Activated CD4-positive, alpha-beta T cell treated with anti-CD3 and anti-CD28 coated beads for 36 hours (primary cell): ENCODE measurements at regions of chr5 and their contacts with region 1.

Region 1: DNA sequence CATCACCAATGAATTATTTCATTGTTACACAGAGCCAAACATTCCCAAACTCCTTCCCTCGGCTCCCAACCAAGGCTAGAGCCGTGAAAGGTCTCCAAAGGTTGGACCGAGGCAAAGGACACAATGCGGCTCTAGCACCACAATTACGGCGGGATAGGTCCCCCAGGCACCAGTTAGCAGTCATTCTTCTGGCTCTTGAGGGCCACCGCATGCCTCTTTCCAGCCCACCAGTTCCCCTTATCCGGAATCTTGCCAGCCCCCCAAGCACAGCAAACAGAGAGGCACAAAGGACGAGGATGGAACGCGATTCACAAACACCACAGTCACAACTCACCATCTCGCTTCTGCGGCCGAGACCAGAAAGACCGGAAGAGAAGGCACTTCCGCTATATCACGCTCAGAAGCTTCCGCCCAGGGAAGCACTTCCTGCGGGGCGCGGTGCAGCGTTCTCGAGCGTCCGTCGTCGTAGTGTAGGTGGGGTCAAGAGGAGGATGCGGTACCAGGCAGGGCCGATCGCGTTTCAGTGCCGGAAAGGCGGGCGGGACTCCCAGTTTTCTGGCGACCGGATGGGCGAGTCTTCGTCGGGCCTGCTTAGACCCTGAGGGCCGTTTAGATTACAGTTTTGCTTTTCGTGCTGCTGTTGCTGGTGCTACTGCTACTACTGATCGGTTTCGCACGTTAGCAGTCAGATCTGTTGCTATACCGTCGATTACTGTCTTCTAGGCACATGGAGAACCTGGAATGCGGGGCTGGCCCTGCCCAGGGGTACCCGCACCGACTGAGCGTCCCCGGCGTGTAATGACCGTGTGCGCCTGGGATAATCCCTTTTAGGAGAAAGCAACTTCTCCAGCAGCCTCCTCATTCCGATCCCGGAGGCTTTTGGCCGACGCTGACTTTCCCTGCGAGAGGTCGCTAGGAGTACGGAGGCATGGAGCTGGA is at the start of gene RPL37:
- DNase-seq: peak; percentile 96
- ATAC-seq: peak; percentile 93
- H3K4me3 Mint-ChIP-seq: peak within 1 kb of the TSS; percentile 99
- H3K27ac Mint-ChIP-seq: peak within 1 kb of the TSS; percentile 100
- H3K4me1 Mint-ChIP-seq: peaks cover 44% of the 10 kb centered on the region
- H3K27me3 Mint-ChIP-seq: no peaks in the 10 kb centered on the region
- total RNA-seq, gene RPL37: 1,915 to 1,951 TPM

Region 2: DNA sequence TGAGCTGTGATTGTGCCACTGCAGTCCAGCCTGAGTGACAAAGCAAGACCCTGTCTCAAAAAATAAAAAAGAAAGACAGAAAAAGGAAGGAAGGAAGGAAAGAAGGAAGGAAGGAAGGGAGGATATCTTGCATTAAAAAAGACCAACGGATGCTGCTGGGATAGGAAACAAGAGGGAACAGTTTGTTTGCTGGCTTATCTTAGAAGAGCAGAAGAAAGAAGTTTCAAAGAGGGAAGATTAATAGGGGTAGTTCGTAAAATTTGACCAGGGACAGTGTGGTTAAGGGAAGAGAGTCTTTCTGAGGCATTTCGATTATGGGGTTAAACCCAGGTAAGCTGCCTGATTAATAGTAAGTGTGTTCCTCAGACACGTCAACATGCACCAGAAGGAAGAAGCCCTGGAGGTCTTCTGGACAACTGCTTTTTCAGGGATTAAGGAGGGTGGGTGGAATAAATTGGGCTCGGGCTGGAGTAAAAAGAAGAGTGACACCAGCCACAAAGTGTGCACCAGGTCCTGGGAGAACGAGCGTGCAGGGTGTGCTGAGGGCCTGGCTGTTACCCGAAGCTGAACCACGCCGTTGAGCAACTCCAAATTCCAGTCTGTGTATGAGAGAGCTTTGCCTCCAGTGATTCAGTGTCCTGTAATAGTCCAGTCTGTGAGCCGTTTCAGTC is 1640.5 kb before region 1 on chr5:
- CTCF ChIA-PET with region 1: no interaction called
- POLR2A ChIA-PET with region 1: no interaction called
- intact Hi-C with region 1: loop called in 1 of 2 experiments (anchors 10 kb)
- DNase-seq: peak; percentile 52
- ATAC-seq: peak; percentile 24
- H3K4me3 Mint-ChIP-seq: peak overlapping the region; percentile 72
- H3K27ac Mint-ChIP-seq: peak overlapping the region; percentile 96
- H3K4me1 Mint-ChIP-seq: peaks cover 74% of the 10 kb centered on the region
- H3K27me3 Mint-ChIP-seq: no peaks in the 10 kb centered on the region

Region 3: DNA sequence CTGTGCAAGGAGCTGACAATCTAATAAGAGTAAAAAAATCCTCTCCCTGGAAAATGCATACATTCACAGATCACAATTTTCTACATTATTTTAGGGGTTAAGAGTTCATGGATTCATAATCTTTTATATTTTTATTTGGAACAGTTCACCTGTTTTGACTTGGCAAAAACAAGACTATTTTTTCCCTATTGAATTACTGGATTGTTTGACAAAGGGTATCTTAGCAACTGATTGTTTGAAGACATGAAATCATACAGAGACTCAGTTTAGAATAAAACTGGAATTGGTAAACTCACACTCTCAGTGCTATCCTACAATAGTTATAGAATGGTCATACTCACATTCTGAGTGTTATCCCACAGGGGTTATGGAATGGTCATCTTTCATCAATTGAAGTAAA is 513.6 kb before region 1 on chr5:
- CTCF ChIA-PET with region 1: no interaction called
- POLR2A ChIA-PET with region 1: no interaction called
- intact Hi-C with region 1: no loop called
- DNase-seq: no peak
- ATAC-seq: no peak
- H3K4me3 Mint-ChIP-seq: no peak overlapping the region
- H3K27ac Mint-ChIP-seq: no peak overlapping the region
- H3K4me1 Mint-ChIP-seq: peaks cover 11% of the 10 kb centered on the region
- H3K27me3 Mint-ChIP-seq: no peaks in the 10 kb centered on the region

Region 4: DNA sequence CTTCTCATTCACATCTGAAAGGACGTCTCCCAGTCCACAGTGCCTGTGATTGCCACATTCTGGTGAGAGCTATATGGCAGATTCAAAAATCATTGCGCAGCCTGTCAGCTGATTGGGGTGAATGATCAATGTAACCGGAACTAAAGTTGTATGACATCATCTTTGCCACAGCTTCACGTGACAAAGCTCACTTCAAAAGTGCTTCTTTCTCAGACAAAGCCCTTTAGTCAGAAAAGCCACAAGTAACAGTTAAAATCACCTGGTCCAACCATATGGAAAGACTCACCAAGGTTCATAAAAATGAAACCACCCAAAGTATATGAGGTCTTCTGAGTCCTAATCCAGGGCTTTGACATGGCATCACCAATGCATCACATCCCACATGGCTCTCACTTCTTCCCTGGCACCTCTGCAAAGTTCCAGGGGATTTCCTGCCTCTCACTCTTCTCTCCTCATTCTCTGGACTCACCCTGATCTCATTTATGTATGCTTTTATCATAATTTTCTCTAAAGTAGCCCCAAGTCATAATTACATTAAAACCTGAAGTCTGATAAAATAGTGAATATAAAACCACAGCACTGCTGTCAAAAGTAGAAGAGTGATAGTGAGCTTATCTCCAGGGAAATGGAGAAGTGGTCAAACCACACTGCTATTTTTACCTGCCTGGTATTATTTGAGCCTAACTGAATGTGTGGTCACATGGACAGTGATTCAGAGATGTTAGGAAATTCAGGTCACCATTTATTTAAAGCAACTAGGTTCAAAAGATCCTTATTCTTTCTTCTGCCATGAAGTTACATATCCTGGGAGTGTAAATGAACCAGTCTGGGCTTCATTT is 348.5 kb before region 1 on chr5:
- CTCF ChIA-PET with region 1: no interaction called
- POLR2A ChIA-PET with region 1: no interaction called
- intact Hi-C with region 1: loop called in 1 of 2 experiments (anchors 10 kb)
- DNase-seq: peak; percentile 82
- ATAC-seq: peak; percentile 75
- H3K4me3 Mint-ChIP-seq: peak overlapping the region; percentile 12
- H3K27ac Mint-ChIP-seq: peak overlapping the region; percentile 91
- H3K4me1 Mint-ChIP-seq: peaks cover 82% of the 10 kb centered on the region
- H3K27me3 Mint-ChIP-seq: no peaks in the 10 kb centered on the region

Region 5: GRCh38 chr5:40775076-40775845 is 59.9 kb before region 1 on chr5:
- CTCF ChIA-PET with region 1: no interaction called
- POLR2A ChIA-PET with region 1: no interaction called
- intact Hi-C with region 1: no loop called
- DNase-seq: no peak
- ATAC-seq: no peak
- H3K4me3 Mint-ChIP-seq: no peak overlapping the region
- H3K27ac Mint-ChIP-seq: peak overlapping the region; percentile 45
- H3K4me1 Mint-ChIP-seq: peaks cover 19% of the 10 kb centered on the region
- H3K27me3 Mint-ChIP-seq: no peaks in the 10 kb centered on the region

Region 6: DNA sequence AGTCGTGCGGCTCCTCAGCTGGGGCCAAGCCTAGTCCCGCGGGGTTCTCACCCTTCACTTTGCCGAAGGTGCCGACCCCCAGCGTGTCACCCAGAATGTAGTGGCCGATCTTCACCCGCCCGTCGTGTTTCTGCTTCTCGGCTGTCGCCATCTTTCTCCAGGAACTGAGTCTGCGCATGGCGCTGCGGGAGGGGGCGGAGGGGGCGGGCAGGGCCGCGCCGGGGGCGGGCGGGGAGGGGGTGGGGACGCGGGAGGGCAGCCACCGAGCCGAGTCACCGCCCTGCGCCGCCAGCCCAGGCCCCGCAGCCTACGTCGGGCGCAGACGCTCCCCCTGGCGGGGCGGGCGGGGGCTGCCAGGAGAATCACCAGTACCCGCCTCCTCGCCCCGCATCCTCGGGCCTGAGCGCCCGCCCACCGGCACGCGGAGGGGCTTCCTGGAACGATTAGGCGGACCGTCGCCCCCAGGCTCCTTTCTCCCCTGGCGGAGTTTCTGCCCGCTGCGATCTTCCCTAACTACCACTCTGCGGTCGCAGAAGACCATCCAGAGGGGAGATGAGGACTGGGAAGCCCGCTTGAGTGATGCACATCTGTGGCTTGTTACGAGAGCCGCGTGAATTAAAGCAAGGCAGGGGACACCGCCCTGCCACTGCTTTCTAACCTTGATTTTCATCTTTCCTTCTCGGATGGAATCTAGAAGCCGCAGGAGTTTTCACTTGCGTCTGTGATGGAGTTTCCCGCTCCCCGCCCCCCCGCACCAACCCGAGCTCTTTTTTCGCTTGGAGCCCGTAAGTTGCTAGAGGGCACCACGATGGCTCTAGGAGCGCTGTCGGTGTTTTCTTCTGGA is 36.9 kb before region 1 on chr5 and contains the start of gene PRKAA1:
- CTCF ChIA-PET with region 1: no interaction called
- POLR2A ChIA-PET with region 1: interaction called, 11 read pairs
- intact Hi-C with region 1: loop called (anchors 1 kb)
- DNase-seq: peak; percentile 93
- ATAC-seq: peak; percentile 94
- H3K4me3 Mint-ChIP-seq: peak within 1 kb of the TSS; percentile 82
- H3K27ac Mint-ChIP-seq: peak within 1 kb of the TSS; percentile 78
- H3K4me1 Mint-ChIP-seq: peaks cover 35% of the 10 kb centered on the region
- H3K27me3 Mint-ChIP-seq: peaks cover 2% of the 10 kb centered on the region
- total RNA-seq, gene PRKAA1: 46.9 to 63.9 TPM

Region 7: GRCh38 chr5:41856644-41857491 is 1021.8 kb after region 1 on chr5:
- CTCF ChIA-PET with region 1: no interaction called
- POLR2A ChIA-PET with region 1: no interaction called
- intact Hi-C with region 1: no loop called
- DNase-seq: peak; percentile 59
- ATAC-seq: peak; percentile 67
- H3K4me3 Mint-ChIP-seq: no peak overlapping the region
- H3K27ac Mint-ChIP-seq: no peak overlapping the region
- H3K4me1 Mint-ChIP-seq: peaks cover 44% of the 10 kb centered on the region
- H3K27me3 Mint-ChIP-seq: no peaks in the 10 kb centered on the region

Region 8: DNA sequence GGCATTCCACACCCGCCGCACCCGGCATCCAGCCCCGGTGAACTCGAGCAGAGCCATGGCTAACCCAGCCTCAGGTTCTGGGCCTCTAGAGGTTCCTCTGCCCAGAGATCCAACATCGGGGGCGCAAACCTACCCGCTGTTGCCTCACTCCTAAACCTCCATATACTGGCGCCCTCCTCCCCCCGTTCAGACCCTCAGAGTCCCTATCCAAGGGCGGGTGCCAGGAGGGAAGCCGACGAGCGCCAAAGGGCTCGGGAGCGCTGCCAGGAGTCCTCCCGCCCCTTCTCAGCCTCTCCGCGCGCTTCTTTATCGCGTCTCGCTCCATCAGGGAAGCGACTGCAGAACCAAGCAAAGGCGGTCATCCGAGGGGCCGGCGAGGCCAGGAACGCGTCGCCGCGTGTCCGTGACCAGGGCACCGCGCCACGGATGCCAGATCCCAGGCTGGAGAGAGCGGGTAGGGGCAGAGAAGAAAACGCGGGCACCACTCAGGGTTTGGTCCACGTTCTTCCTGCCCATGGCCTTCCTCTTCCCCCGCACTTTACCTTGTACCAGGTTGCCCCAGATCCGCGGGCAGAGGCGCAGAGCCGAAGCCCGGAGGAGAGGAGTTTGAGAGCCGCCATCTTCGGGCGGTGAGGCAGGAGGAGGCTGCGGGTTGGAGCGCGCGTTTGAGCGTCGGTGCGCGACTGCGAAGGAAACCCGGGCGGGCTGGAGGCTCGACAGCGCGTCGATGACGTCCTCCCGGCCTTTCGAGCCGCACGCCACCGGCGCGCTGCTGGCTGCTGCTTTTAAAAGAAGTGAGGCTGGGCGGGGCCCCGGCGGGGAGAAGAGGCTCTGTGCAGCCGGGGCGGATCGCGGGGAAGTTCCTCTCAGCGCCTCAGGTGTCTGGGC is 1034.9 kb after region 1 on chr5 and contains the start of gene OXCT1:
- CTCF ChIA-PET with region 1: no interaction called
- POLR2A ChIA-PET with region 1: no interaction called
- intact Hi-C with region 1: loop called in 1 of 2 experiments (anchors 10 kb)
- DNase-seq: peak; percentile 96
- ATAC-seq: peak; percentile 92
- H3K4me3 Mint-ChIP-seq: peak within 1 kb of the TSS; percentile 91
- H3K27ac Mint-ChIP-seq: peak within 1 kb of the TSS; percentile 94
- H3K4me1 Mint-ChIP-seq: peaks cover 54% of the 10 kb centered on the region
- H3K27me3 Mint-ChIP-seq: no peaks in the 10 kb centered on the region
- total RNA-seq, gene OXCT1: 70.3 to 91.4 TPM

Region 9: DNA sequence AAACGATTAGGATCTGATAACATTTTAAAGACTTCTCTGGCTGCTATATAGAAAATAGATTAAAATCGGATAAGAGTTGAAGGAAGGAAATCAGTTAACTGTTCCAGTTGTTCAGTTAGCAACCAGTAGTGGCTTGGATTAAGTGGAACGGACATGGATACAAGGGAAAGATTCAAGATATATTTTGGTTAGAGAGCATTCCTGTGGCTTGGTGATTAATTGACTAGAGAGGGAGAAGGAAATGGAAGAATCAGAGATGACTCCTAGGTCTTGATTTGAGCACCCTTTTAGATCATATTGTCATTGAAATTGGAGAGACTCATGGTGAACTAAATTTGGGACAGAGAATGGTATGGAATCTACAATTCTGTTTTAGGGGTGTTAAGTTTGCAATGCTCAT is 1186.0 kb after region 1 on chr5:
- CTCF ChIA-PET with region 1: no interaction called
- POLR2A ChIA-PET with region 1: no interaction called
- intact Hi-C with region 1: no loop called
- DNase-seq: no peak
- ATAC-seq: no peak
- H3K4me3 Mint-ChIP-seq: no peak overlapping the region
- H3K27ac Mint-ChIP-seq: no peak overlapping the region
- H3K4me1 Mint-ChIP-seq: no peaks in the 10 kb centered on the region
- H3K27me3 Mint-ChIP-seq: peaks cover 13% of the 10 kb centered on the region